ENCODE measurements at regions of chr5 and their contacts with region 1.

Region 1: GRCh38 chr5:133025804-133026663 is at the start of gene ZCCHC10:
- DNase-seq: peak; percentile 96
- H3K4me3 ChIP-seq: peak within 1 kb of the TSS; percentile 55 to 86 (median 84)
- H3K27ac ChIP-seq: peak within 1 kb of the TSS; percentile 54
- H3K4me1 ChIP-seq: peaks cover 5% of the 10 kb centered on the region
- H3K27me3 ChIP-seq: no peaks in the 10 kb centered on the region
- CTCF ChIP-seq: no peak
- POLR2A ChIP-seq: peak; percentile 96
- total RNA-seq, gene ZCCHC10: 25.9 and 30.5 TPM in 2 replicates

Region 2: DNA sequence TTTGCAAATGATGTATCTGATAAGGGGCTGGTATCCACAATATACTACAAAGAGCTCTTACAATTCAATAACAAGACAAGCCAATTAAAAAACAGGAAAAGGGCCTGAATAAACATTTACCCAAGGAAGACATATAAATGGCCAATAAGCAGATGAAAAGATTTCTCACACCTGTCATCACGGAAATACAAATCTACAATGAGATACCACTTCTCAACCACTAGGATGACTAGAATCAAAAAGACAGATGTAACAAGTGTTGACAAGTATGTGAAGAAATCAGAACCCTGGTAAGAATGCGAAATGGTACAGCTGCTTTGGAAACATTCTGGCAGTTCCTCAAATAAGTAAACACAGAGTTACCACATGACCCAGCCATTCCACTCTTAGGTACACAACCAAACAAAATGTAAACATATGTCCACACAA is 120.2 kb before region 1 on chr5:
- CTCF ChIA-PET with region 1: no interaction called
- POLR2A ChIA-PET with region 1: no interaction called
- dilution Hi-C with region 1: no loop called
- intact Hi-C with region 1: loop called (anchors 5 kb)
- DNase-seq: peak; percentile 78
- H3K4me3 ChIP-seq: no peak overlapping the region
- H3K27ac ChIP-seq: no peak overlapping the region
- H3K4me1 ChIP-seq: peaks cover 23% of the 10 kb centered on the region
- H3K27me3 ChIP-seq: no peaks in the 10 kb centered on the region
- CTCF ChIP-seq: no peak
- POLR2A ChIP-seq: no peak

Region 3: GRCh38 chr5:133164759-133165158 is 138.7 kb after region 1 on chr5:
- CTCF ChIA-PET with region 1: no interaction called
- POLR2A ChIA-PET with region 1: no interaction called
- dilution Hi-C with region 1: no loop called
- intact Hi-C with region 1: no loop called
- DNase-seq: no peak
- H3K4me3 ChIP-seq: no peak overlapping the region
- H3K27ac ChIP-seq: no peak overlapping the region
- H3K4me1 ChIP-seq: no peaks in the 10 kb centered on the region
- H3K27me3 ChIP-seq: peaks cover 0 to 4% of the 10 kb centered on the region in 2 experiments
- CTCF ChIP-seq: no peak
- POLR2A ChIP-seq: no peak

Measured in endothelial cell of umbilical vein (primary cell).